ENCODE measurements at regions of chr16 and their contacts with region 1.

Region 1: DNA sequence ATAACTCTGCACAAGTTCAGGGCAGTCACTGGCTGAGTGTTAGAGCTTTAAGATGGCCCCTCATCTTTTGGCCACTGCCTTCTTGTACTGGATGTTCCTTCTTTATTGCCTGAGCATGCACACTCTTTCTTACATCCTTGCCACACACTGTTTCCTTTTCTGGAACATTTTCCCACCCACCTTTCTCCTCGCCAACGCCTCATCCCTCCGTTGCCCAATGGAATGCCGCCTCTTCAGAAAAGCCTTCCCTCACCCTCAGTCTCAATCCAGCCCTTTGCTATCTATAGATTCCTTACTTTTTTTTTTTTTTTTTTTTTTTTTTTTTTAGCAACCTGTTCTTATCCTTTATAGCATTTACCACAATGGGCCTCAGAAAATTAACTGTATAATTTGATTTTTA is 47.9 kb upstream of the RBFOX1 start:
- DNase-seq: no peak
- H3K4me3 ChIP-seq: no peak overlapping the region
- H3K27ac ChIP-seq: no peak overlapping the region
- H3K4me1 ChIP-seq: no peaks in the 10 kb centered on the region
- H3K27me3 ChIP-seq: no peaks in the 10 kb centered on the region
- CTCF ChIP-seq: no peak
- POLR2A ChIP-seq: no peak

Region 2: DNA sequence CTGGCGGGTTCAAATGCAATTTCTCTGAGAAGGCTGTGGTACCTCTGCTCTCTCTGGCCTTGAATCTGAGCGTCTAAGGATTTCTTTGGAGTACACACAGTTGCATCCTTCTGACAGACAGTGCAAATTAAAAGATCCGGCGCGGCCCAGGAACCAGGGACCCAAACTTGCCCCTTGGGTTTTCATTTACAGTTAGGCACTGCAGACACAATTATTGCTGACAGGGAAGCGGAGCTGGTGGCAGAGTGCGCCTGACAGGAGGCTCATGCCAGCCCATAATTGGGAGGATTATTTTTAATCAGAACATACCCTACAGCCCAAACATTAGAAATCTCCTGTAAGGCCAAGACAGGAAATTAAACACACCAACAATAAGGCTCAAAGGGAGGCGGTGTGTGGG is 975.5 kb before region 1 on chr16:
- intact Hi-C with region 1: loop called (anchors 10 kb)
- DNase-seq: no peak
- H3K4me3 ChIP-seq: no peak overlapping the region
- H3K27ac ChIP-seq: no peak overlapping the region
- H3K4me1 ChIP-seq: no peaks in the 10 kb centered on the region
- H3K27me3 ChIP-seq: no peaks in the 10 kb centered on the region
- CTCF ChIP-seq: no peak
- POLR2A ChIP-seq: no peak

Region 3: DNA sequence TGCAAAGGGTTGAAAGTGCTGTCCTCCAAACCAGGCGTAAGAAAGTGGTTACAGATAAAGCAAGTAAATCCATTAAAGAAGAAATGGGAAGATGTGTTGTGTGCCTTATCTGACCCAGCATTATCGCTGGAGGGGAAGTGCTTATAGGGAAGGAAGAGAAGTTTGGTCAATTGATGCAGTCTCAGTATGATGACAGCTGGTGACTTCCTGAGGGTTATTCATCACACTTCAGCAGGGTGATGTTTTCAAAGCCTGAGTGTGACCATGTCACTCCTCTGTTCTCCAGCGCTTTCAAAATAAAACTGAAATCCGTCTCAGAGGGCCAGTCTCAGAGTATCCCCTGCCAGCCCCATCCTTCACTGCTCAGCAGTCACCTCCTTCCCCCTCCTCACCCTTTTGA is 457.5 kb before region 1 on chr16:
- intact Hi-C with region 1: no loop called
- DNase-seq: no peak
- H3K4me3 ChIP-seq: no peak overlapping the region
- H3K27ac ChIP-seq: no peak overlapping the region
- H3K4me1 ChIP-seq: no peaks in the 10 kb centered on the region
- H3K27me3 ChIP-seq: no peaks in the 10 kb centered on the region
- CTCF ChIP-seq: no peak
- POLR2A ChIP-seq: no peak

Region 4: DNA sequence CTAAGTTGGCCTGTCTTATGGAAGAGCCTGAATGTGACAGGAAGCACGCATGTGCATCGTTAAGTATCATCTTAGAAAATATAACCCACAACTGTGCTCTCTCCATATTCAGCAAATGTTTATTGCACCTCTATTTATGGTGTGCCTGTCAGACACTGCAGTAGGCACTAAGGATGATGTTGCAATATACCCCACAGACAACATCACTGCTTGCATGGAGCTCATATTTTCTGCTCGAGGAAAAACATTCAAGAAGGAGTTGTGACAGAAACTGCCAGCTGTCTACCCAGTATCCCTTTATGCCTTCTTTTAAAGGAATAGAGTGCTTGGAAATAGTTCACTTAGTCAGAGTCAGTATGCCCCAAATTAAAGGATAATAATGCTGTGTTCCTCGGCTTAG is 84.5 kb before region 1 on chr16:
- intact Hi-C with region 1: loop called (anchors 5 kb)
- DNase-seq: no peak
- H3K4me3 ChIP-seq: no peak overlapping the region
- H3K27ac ChIP-seq: no peak overlapping the region
- H3K4me1 ChIP-seq: no peaks in the 10 kb centered on the region
- H3K27me3 ChIP-seq: no peaks in the 10 kb centered on the region
- CTCF ChIP-seq: no peak
- POLR2A ChIP-seq: no peak

Region 5: GRCh38 chr16:7615565-7615964 is 330.8 kb after region 1 on chr16:
- intact Hi-C with region 1: no loop called
- DNase-seq: no peak
- H3K4me3 ChIP-seq: no peak overlapping the region
- H3K27ac ChIP-seq: no peak overlapping the region
- H3K4me1 ChIP-seq: no peaks in the 10 kb centered on the region
- H3K27me3 ChIP-seq: no peaks in the 10 kb centered on the region
- CTCF ChIP-seq: no peak
- POLR2A ChIP-seq: no peak

Region 6: GRCh38 chr16:8258523-8258922 is 973.7 kb after region 1 on chr16:
- intact Hi-C with region 1: no loop called
- DNase-seq: no peak
- H3K4me3 ChIP-seq: no peak overlapping the region
- H3K27ac ChIP-seq: no peak overlapping the region
- H3K4me1 ChIP-seq: no peaks in the 10 kb centered on the region
- H3K27me3 ChIP-seq: no peaks in the 10 kb centered on the region
- CTCF ChIP-seq: no peak
- POLR2A ChIP-seq: no peak